Activated CD4-positive, alpha-beta memory T cell treated with anti-CD3 and anti-CD28 coated beads for 36 hours (primary cell): ENCODE measurements at regions of chr17 and their contacts with region 1.

Region 1: GRCh38 chr17:47733047-47733673 is at the start of gene TBX21:
- DNase-seq: peak; percentile 94
- H3K4me3 Mint-ChIP-seq: peak within 1 kb of the TSS; percentile 100
- H3K27ac Mint-ChIP-seq: peak within 1 kb of the TSS; percentile 93
- H3K4me1 Mint-ChIP-seq: peaks cover 69% of the 10 kb centered on the region
- H3K27me3 Mint-ChIP-seq: no peaks in the 10 kb centered on the region
- total RNA-seq, gene TBX21: 57.7 to 58.2 TPM

Region 2: DNA sequence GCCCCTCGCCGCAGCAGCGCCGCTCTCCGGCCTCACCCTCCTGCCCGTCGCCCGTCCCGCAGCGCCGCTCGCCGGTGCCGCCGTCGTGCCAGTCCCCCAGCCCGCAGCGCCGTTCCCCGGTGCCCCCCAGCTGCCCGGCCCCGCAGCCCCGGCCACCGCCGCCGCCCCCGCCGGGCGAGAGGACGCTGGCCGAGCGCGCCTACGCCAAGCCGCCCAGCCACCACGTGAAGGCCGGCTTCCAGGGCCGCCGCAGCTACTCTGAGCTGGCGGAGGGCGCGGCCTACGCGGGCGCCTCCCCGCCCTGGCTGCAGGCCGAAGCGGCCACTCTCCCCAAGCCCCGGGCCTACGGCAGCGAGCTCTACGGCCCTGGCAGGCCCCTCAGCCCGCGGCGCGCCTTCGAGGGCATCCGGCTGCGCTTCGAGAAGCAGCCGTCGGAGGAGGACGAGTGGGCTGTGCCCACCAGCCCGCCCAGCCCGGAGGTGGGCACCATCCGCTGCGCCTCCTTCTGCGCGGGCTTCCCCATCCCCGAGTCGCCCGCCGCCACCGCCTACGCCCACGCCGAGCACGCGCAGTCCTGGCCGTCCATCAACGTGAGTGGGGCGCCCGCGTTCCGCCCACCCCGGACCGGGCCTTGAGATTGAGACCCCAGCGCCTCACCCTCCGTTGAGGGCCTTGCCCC is 24.2 kb before region 1 on chr17:
- CTCF ChIA-PET with region 1: interaction called, 22 read pairs
- POLR2A ChIA-PET with region 1: interaction called, 13 read pairs
- intact Hi-C with region 1: loop called (anchors 1 kb)
- DNase-seq: no peak
- H3K4me3 Mint-ChIP-seq: no peak overlapping the region
- H3K27ac Mint-ChIP-seq: no peak overlapping the region
- H3K4me1 Mint-ChIP-seq: peaks cover 62% of the 10 kb centered on the region
- H3K27me3 Mint-ChIP-seq: no peaks in the 10 kb centered on the region

Region 3: DNA sequence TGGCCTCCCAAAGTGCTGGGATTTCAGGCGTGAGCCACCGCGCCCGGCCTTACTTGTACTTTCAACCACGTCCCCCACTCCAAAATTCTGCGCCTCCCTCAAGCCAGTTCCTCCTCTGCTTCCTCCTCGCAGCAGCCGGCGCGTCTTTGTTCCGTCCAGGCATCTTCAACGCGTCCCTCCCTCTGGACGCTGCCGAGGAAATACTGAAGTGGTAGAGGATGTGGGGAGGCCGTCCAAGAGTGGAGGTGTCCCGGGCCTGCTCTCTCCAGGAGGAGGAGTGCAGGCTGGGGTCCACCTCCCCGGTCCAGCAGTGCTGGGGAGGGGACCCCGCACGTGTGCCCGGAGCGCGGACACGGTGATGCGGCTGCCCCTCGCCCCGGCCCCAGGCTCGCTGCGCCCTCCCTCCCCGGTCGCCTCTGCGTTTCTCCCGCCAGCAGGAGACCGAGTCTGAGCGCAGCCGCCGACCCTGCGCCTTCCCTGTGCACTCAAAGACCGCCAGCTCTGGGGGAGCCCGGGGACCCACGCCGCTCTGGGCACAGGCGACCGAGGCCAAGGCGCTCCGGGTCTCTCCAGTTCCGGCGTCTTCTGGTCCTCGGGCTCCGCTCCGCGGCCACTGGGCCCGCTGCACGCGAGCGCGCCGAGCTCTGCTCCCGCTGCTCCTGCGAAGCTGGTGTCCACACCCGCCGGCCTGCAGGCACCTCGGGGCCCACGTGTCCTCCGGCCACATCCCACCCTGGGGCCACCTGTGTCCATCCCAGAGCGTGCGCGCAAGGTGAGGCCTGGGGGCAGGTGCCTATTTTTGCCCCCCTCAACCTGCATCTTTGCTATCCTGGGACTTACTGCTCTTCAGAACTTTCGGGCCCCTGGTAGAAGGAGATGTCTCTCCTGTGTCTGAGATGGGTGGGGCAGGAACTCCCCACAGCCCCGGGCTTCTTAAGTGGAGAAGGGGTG is 56.7 kb after region 1 on chr17:
- CTCF ChIA-PET with region 1: interaction called, 3 read pairs
- POLR2A ChIA-PET with region 1: no interaction called
- intact Hi-C with region 1: loop called (anchors 5 kb)
- DNase-seq: peak; percentile 78
- H3K4me3 Mint-ChIP-seq: peak overlapping the region; percentile 66
- H3K27ac Mint-ChIP-seq: no peak overlapping the region
- H3K4me1 Mint-ChIP-seq: peaks cover 11% of the 10 kb centered on the region
- H3K27me3 Mint-ChIP-seq: peaks cover 43% of the 10 kb centered on the region